ENCODE measurements at regions of chr5 and their contacts with region 1.

Region 1: GRCh38 chr5:40834849-40835787 is at the start of gene RPL37:
- DNase-seq: peak; percentile 96
- H3K4me3 Mint-ChIP-seq: peak within 1 kb of the TSS; percentile 100
- H3K27ac Mint-ChIP-seq: peak within 1 kb of the TSS; percentile 100
- H3K4me1 Mint-ChIP-seq: peaks cover 48% of the 10 kb centered on the region
- H3K27me3 Mint-ChIP-seq: no peaks in the 10 kb centered on the region
- total RNA-seq, gene RPL37: 2,148 to 2,239 TPM

Region 2: GRCh38 chr5:40210694-40211093 is 624.4 kb before region 1 on chr5:
- CTCF ChIA-PET with region 1: no interaction called
- intact Hi-C with region 1: loop called (anchors 1 kb)
- DNase-seq: no peak
- H3K4me3 Mint-ChIP-seq: no peak overlapping the region
- H3K27ac Mint-ChIP-seq: peak overlapping the region; percentile 98
- H3K4me1 Mint-ChIP-seq: peaks cover 63% of the 10 kb centered on the region
- H3K27me3 Mint-ChIP-seq: no peaks in the 10 kb centered on the region

Region 3: DNA sequence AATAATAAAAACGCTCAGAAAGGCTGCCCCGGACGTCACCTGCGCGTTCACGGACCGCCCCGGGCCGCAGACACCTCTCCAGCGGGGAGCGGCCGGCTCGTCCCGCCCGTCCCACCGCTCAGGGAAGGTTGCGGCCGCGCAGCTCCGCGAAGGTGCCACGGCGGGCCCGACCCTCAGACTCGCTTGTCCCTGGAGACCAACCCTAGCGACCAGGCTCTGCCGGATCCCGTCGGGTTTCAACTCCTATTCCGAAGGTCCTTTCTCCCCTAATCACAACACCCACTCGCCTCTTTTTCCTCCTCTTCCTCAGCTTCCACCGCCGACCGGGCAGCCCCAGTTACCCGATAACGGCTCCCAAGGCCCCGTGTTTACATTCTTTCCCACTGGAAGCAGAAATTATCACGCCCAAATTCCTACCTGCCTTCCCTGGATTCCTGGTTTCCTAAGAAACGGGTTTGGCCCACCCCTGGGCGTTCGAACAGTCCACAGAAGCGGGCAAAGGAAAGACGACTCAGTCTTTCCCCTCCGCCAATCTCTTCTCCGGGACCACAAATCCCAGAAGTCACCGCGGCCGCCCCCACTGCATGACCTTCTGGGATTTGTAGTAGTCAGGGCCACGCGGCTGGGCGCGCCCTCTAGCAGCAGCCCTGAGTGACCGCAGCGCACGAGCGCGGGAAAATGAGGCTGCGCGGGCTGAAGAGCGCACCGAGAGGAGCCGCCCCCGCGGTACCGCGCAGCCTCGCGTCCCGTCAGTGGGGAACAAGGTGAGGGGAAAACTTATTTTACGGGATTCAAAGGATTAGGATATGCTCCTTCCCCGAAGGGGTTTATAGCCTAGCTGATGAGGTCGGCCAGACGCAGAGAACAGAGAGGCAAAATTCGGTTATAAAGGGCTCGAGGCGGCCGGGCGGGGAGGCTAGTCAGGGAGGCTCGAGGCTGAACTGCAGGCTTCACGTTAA is 79.4 kb before region 1 on chr5 and contains the start of gene TTC33:
- CTCF ChIA-PET with region 1: no interaction called
- intact Hi-C with region 1: loop called (anchors 1 kb)
- DNase-seq: peak; percentile 98
- H3K4me3 Mint-ChIP-seq: no peak within 1 kb of the TSS
- H3K27ac Mint-ChIP-seq: no peak within 1 kb of the TSS
- H3K4me1 Mint-ChIP-seq: peaks cover 10% of the 10 kb centered on the region
- H3K27me3 Mint-ChIP-seq: no peaks in the 10 kb centered on the region
- total RNA-seq, gene TTC33: 24.4 to 27.4 TPM

Region 4: DNA sequence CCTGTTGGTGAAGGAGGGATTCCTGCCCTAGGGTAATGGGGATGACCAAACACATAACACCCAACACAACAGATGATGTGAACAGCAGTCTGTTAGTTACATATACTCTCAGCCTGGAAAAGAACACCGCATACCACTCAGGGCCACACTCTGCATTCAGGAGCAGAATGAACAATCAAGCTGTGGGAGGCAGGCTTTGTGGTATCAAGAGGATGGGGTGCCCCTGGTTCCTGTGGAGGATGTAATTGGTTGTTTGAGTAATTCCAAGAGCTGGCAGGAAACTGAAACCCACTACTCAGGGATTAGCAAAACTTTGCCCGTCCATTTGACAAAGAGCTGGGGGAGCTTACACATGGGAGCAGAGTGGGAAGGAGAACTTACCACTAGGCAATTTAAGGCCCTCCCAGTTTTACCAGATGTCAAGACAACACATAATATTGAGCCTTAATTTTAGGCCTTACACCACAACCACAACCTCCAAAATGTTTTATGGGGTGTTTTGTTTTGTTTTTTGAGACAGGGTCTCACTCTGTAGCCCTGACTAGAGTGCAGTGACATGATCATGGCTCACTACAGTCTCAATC is 21.3 kb before region 1 on chr5:
- CTCF ChIA-PET with region 1: no interaction called
- intact Hi-C with region 1: loop called (anchors 1 kb)
- DNase-seq: peak; percentile 50
- H3K4me3 Mint-ChIP-seq: no peak overlapping the region
- H3K27ac Mint-ChIP-seq: peak overlapping the region; percentile 35
- H3K4me1 Mint-ChIP-seq: peaks cover 7% of the 10 kb centered on the region
- H3K27me3 Mint-ChIP-seq: no peaks in the 10 kb centered on the region

Region 5: GRCh38 chr5:41903892-41904799 is 1069.0 kb after region 1 on chr5 and contains the start of gene RIMOC1:
- CTCF ChIA-PET with region 1: no interaction called
- intact Hi-C with region 1: loop called (anchors 1 kb)
- DNase-seq: peak; percentile 98
- H3K4me3 Mint-ChIP-seq: peak within 1 kb of the TSS; percentile 79
- H3K27ac Mint-ChIP-seq: peak within 1 kb of the TSS; percentile 88
- H3K4me1 Mint-ChIP-seq: peaks cover 38% of the 10 kb centered on the region
- H3K27me3 Mint-ChIP-seq: no peaks in the 10 kb centered on the region
- total RNA-seq, gene RIMOC1: 16.6 to 19.6 TPM

Measured in activated naive CD4-positive, alpha-beta T cell treated with anti-CD3 and anti-CD28 coated beads for 36 hours (primary cell).